PC-9 (cell line): ENCODE measurements at regions of chr3 and their contacts with region 1.

Region 1: DNA sequence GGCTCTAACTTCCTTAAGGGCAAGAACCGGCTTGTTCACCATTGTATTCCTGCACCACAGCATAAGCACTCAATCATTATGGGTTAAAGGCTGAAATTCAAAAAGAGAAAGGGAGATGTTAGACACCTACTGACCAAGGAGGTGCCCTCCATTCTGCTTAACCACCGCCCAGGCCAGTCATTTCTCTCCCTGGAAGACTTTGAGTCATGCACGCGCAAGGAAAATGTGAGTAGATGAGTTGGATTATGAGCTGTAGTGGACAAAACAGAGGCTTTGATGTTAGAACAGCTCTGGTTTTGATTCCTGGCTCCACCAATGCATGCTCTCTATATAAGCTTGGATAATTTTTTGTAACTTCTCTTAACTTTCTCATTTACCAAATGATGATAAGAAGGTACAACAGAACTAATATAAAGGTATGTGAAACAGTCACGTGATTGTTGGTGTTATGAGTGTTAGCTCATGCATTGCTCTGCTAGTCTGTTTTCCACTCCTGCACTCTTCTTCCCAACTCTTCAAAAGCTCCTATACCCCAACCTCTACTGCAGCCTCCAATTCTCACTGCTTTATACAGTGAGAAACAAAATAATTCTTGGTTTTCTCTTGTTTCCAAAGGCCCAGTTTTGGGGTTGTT is 148.4 kb upstream of the ATP11B start:
- DNase-seq: peak in 1 of 2 experiments; percentile 34
- H3K4me3 ChIP-seq: no peak overlapping the region
- H3K27ac ChIP-seq: no peak overlapping the region
- H3K4me1 ChIP-seq: peaks cover 11% of the 10 kb centered on the region
- H3K27me3 ChIP-seq: no peaks in the 10 kb centered on the region
- CTCF ChIP-seq: no peak

Region 2: GRCh38 chr3:181689546-181689945 is 955.4 kb before region 1 on chr3:
- CTCF ChIA-PET with region 1: no interaction called
- POLR2A ChIA-PET with region 1: interaction called, 53 read pairs
- intact Hi-C with region 1: no loop called
- DNase-seq: no peak
- H3K4me3 ChIP-seq: no peak overlapping the region
- H3K27ac ChIP-seq: no peak overlapping the region
- H3K4me1 ChIP-seq: no peaks in the 10 kb centered on the region
- H3K27me3 ChIP-seq: no peaks in the 10 kb centered on the region
- CTCF ChIP-seq: no peak

Region 3: DNA sequence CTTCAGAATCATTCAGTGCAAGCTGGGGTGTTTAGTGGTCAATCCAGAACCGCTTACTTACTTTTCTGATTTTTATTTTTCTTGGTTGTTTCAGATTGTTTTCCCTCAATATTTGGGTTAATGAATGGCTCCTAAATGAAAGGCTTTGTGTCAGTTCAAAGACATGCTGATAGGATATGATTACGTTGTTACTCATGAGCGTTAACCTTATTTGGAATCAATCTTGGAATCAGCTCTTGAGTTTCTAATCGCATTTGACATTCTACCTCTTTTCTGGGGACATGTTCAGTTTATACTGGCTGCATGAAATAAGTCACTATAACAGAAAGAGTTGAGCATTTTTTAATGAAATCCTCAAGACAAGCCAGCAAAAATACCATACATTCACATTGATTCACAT is 198.6 kb after region 1 on chr3:
- CTCF ChIA-PET with region 1: no interaction called
- POLR2A ChIA-PET with region 1: no interaction called
- intact Hi-C with region 1: no loop called
- DNase-seq: no peak
- H3K4me3 ChIP-seq: no peak overlapping the region
- H3K27ac ChIP-seq: no peak overlapping the region
- H3K4me1 ChIP-seq: no peaks in the 10 kb centered on the region
- H3K27me3 ChIP-seq: no peaks in the 10 kb centered on the region
- CTCF ChIP-seq: no peak

Region 4: DNA sequence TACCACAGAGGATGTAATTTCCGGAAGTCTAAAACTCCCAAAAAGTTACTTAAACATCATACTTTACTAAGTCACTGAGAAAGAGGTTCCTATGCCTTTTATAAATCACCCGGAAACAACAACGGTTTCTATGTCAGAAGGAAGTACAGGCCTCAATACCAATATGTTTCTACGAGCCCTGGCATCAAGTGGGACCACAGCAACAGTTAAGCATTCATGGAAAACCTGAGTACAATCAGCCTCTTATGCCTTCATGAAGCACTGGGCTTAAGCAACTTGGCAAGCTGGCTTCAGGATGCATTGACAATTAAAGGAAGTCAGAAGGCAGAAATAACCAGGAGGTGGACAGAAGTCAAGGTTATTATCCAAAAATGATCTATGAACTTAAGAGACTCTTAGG is 589.0 kb after region 1 on chr3:
- CTCF ChIA-PET with region 1: no interaction called
- POLR2A ChIA-PET with region 1: no interaction called
- intact Hi-C with region 1: no loop called
- DNase-seq: no peak
- H3K4me3 ChIP-seq: no peak overlapping the region
- H3K27ac ChIP-seq: no peak overlapping the region
- H3K4me1 ChIP-seq: no peaks in the 10 kb centered on the region
- H3K27me3 ChIP-seq: no peaks in the 10 kb centered on the region
- CTCF ChIP-seq: no peak